ENCODE measurements at regions of chr22 and their contacts with region 1.

Region 1: GRCh38 chr22:33049119-33049729 is 9.0 kb downstream of the SYN3 start:
- DNase-seq: peak; percentile 35
- ATAC-seq: peak; percentile 65
- H3K4me3 Mint-ChIP-seq: no peak overlapping the region
- H3K27ac Mint-ChIP-seq: no peak overlapping the region
- H3K4me1 Mint-ChIP-seq: peaks cover 17% of the 10 kb centered on the region
- H3K27me3 Mint-ChIP-seq: peaks cover 27% of the 10 kb centered on the region
- CTCF ChIP-seq: peak; percentile 93

Region 2: DNA sequence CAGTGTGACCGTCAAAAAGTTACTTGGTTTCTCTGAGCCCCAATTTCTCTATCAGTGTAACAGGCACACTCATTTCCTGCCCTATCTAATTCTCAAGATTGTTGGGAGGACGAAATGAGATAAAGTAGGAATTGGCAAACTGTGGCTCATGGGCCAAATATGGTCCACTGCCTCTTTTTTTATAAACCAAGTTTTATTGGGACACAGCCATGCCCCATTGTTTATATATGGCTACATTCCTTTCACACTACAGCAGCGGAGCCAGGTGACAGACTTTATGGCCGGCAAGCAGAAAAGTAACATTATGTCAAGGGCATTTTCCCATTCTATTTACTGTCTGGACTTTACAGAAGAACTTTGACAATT is 364.4 kb before region 1 on chr22:
- CTCF ChIA-PET with region 1: no interaction called
- POLR2A ChIA-PET with region 1: no interaction called
- intact Hi-C with region 1: no loop called
- DNase-seq: no peak
- ATAC-seq: no peak
- H3K4me3 Mint-ChIP-seq: no peak overlapping the region
- H3K27ac Mint-ChIP-seq: no peak overlapping the region
- H3K4me1 Mint-ChIP-seq: no peaks in the 10 kb centered on the region
- H3K27me3 Mint-ChIP-seq: peaks cover 7% of the 10 kb centered on the region
- CTCF ChIP-seq: no peak

Region 3: DNA sequence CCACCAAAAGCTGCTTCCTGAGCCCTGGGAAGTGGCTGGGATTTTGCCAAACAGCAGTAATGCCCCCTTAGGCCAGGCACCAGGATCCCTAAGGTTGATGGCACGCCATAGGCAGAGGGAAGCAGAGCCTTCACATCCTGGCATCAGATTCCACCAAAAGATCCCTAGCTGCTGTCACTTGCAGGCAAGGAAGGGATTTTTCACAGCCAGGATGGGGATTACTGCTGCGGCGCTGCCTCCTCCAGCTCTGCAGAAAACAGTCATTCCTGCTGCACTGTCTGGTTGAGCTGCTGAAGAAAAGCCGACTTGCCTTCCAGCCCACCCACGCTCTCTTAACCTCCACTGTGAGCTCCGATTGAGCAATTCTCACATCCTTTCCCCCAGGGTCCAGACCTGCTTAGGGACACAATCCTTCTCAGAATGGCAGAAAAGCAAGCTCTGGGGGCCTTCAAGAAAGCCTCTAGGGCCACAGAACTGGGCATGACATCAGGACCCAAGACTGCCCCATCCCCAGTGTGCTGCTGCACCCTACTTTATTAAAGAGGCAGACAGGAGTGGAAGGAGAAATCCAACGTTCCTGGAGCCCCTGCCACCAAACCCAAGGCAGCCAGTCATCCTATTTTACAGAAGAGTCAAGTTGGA is 11.0 kb before region 1 on chr22:
- CTCF ChIA-PET with region 1: interaction called, 11 read pairs
- POLR2A ChIA-PET with region 1: no interaction called
- intact Hi-C with region 1: no loop called
- DNase-seq: no peak
- ATAC-seq: no peak
- H3K4me3 Mint-ChIP-seq: no peak overlapping the region
- H3K27ac Mint-ChIP-seq: no peak overlapping the region
- H3K4me1 Mint-ChIP-seq: no peaks in the 10 kb centered on the region
- H3K27me3 Mint-ChIP-seq: peaks cover 10% of the 10 kb centered on the region
- CTCF ChIP-seq: no peak

Measured in activated B cell treated with CpG ODN at 0.5 μM for 24 hours (primary cell).